H1 (cell line): ENCODE measurements at regions of chr6 and their contacts with region 1.

Region 1: GRCh38 chr6:149918151-149918905 is 4.6 kb downstream of the RAET1G start:
- DNase-seq: peak in 1 of 2 experiments; percentile 14
- H3K4me3 ChIP-seq: no peak overlapping the region
- H3K27ac ChIP-seq: no peak overlapping the region
- H3K4me1 ChIP-seq: peaks cover 0 to 5% (median 0%) of the 10 kb centered on the region in 4 experiments; a peak in 2 of 7 replicates
- H3K27me3 ChIP-seq: peaks cover 15 to 32% (median 28%) of the 10 kb centered on the region in 4 experiments
- CTCF ChIP-seq: no peak
- EP300 ChIP-seq: no peak
- POLR2A ChIP-seq: no peak
- RAD21 ChIP-seq: no peak

Region 2: DNA sequence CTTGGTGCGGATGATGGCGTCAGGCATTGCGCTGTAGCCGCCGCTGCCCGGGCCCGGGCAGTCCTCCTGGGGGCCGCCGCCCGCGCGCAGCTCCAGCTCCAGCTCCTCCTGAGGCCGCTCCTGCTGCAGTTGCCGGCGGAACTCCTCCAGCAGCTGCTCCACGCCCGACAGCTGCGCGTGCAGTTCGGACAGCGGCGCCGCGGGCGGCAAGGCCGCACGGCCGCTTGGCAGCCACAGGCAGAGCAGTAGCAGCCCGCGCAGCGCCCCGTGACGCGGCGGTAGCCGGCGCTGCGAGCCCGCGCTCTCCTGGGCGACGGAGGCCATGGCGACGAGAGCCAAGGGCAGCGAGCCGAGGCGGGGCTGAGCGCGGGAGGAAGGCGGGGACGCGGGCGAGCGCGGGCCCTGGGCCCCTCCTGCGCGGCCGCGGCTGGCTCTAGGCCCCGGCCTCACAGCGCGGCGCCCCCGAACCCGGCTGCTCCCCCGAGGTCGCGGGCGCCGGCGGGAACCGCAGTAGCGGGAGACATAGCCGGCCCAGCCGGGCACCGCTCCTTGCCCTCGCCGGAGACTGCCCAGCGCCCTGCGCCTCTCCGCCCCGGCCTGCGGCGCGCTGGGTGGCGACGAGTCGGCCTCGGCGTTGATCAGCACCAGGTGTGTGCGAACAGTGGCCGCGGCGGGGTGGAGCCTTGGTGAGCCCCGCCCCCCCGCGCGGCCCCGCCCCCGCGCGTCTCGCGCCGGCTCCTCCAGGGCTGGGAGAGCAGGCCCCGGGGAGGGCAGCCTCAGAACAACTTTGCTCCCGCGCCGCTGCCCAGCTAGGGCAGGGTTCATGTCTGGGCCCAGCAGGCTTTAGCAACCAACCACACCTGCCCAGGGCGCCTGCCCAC is 54.4 kb before region 1 on chr6 and contains the start of gene LRP11:
- CTCF ChIA-PET with region 1: interaction called, 17 read pairs
- POLR2A ChIA-PET with region 1: interaction called, 3 read pairs
- DNase-seq: peak; percentile 66 to 93
- H3K4me3 ChIP-seq: peak within 1 kb of the TSS; percentile 48 to 80 (median 74)
- H3K27ac ChIP-seq: peak within 1 kb of the TSS; percentile 84
- H3K4me1 ChIP-seq: peaks cover 5 to 20% (median 11%) of the 10 kb centered on the region in 4 experiments
- H3K27me3 ChIP-seq: peaks cover 0 to 13% (median 5%) of the 10 kb centered on the region in 4 experiments; a peak in 5 of 7 replicates
- CTCF ChIP-seq: no peak
- EP300 ChIP-seq: no peak
- POLR2A ChIP-seq: peak; percentile 33 to 78
- RAD21 ChIP-seq: no peak
- total RNA-seq, gene LRP11: 20.0 TPM in 2 replicates

Region 3: DNA sequence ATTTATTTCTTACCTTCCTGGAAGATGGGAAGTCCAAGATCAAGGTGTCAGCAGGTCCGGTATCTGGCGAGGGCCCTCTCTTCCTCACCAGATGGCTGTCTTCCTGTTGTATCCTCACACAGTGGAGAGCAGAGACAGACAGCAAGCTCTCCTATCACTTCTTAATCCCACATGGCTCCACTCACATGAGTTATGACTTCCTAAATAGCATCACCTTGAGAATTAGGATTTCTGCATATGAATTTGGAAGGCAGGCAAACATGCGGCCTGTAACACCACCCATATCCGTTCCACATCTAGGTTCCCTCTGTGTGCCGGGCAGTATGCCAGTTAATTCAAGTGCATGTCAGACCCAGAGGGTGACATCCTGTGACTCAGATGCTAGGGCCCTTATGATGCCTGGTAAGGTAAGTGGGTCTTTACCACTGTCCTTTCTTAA is 22.5 kb before region 1 on chr6:
- CTCF ChIA-PET with region 1: interaction called, 13 read pairs
- POLR2A ChIA-PET with region 1: no interaction called
- DNase-seq: no peak
- H3K4me3 ChIP-seq: no peak overlapping the region
- H3K27ac ChIP-seq: no peak overlapping the region
- H3K4me1 ChIP-seq: peaks cover 0 to 4% (median 0%) of the 10 kb centered on the region in 4 experiments; a peak in 2 of 7 replicates
- H3K27me3 ChIP-seq: no peaks in the 10 kb centered on the region
- CTCF ChIP-seq: no peak
- EP300 ChIP-seq: no peak
- POLR2A ChIP-seq: no peak
- RAD21 ChIP-seq: no peak

Region 4: GRCh38 chr6:149903938-149904611 is 14.3 kb before region 1 on chr6:
- CTCF ChIA-PET with region 1: interaction called, 20 read pairs
- POLR2A ChIA-PET with region 1: interaction called, 3 read pairs
- DNase-seq: no peak
- H3K4me3 ChIP-seq: no peak overlapping the region
- H3K27ac ChIP-seq: no peak overlapping the region
- H3K4me1 ChIP-seq: no peaks in the 10 kb centered on the region
- H3K27me3 ChIP-seq: no peaks in the 10 kb centered on the region
- CTCF ChIP-seq: peak in 1 of 3 experiments; percentile 14; a peak in 1 of 4 replicates
- EP300 ChIP-seq: no peak
- POLR2A ChIP-seq: no peak
- RAD21 ChIP-seq: no peak

Region 5: DNA sequence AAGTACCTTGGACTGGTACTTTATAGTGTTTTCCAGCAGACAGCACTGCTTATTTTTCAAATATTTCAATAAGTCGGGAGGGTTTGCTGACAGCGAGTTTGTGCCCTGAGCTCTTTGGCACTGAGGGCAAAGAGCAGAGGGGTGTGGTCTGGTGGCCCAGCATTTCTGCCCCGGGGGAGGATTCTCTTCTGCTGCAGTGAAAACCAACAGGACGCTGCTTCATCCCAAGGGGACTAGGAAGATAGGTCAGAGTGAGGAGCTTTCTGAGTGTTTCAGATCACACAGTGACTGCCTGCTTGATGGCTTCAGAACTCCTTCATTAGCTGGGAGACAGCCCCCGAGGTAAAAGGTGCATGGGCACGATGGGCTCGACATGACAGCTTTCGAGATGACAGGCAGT is 32.1 kb after region 1 on chr6:
- CTCF ChIA-PET with region 1: no interaction called
- POLR2A ChIA-PET with region 1: no interaction called
- DNase-seq: peak in 1 of 2 experiments; percentile 31
- H3K4me3 ChIP-seq: no peak overlapping the region
- H3K27ac ChIP-seq: no peak overlapping the region
- H3K4me1 ChIP-seq: peaks cover 0 to 2% (median 0%) of the 10 kb centered on the region in 4 experiments; a peak in 1 of 7 replicates
- H3K27me3 ChIP-seq: peaks cover 13 to 62% (median 38%) of the 10 kb centered on the region in 4 experiments
- CTCF ChIP-seq: no peak
- EP300 ChIP-seq: no peak
- POLR2A ChIP-seq: no peak
- RAD21 ChIP-seq: no peak

Region 6: GRCh38 chr6:150001295-150002008 is 83.1 kb after region 1 on chr6:
- CTCF ChIA-PET with region 1: no interaction called
- POLR2A ChIA-PET with region 1: no interaction called
- DNase-seq: no peak
- H3K4me3 ChIP-seq: no peak overlapping the region
- H3K27ac ChIP-seq: no peak overlapping the region
- H3K4me1 ChIP-seq: peaks cover 0 to 9% (median 4%) of the 10 kb centered on the region in 4 experiments; a peak in 3 of 7 replicates
- H3K27me3 ChIP-seq: peaks cover 12 to 29% (median 26%) of the 10 kb centered on the region in 4 experiments
- CTCF ChIP-seq: no peak
- EP300 ChIP-seq: no peak
- POLR2A ChIP-seq: no peak
- RAD21 ChIP-seq: no peak